ENCODE measurements at regions of chr22 and their contacts with region 1.

Region 1: GRCh38 chr22:31970490-31971444 is 26.4 kb downstream of the YWHAH start:
- DNase-seq: peak; percentile 69 to 97 (median 86)
- ATAC-seq: peak; percentile 99
- H3K4me3 ChIP-seq: peak overlapping the region; percentile 70
- H3K4me3 Mint-ChIP-seq: peak overlapping the region; percentile 72 to 87 (median 82)
- H3K27ac ChIP-seq: peak overlapping the region; percentile 37
- H3K27ac Mint-ChIP-seq: peak overlapping the region in 7 of 9 donors; percentile 19 to 75 (median 62)
- H3K4me1 ChIP-seq: peaks cover 8 to 10% of the 10 kb centered on the region in 2 donors
- H3K4me1 Mint-ChIP-seq: peaks cover 9 to 18% (median 13%) of the 10 kb centered on the region in 7 donors
- H3K27me3 ChIP-seq: no peaks in the 10 kb centered on the region
- H3K27me3 Mint-ChIP-seq: peaks cover 0 to 2% (median 0%) of the 10 kb centered on the region in 5 donors

Region 2: GRCh38 chr22:31556627-31557203 is 414.1 kb before region 1 on chr22:
- CTCF ChIA-PET with region 1: no interaction called
- POLR2A ChIA-PET with region 1: no interaction called
- intact Hi-C with region 1: loop called in 1 of 2 experiments (anchors 1 kb)
- DNase-seq: peak in 5 of 9 donors; percentile 25 to 40 (median 28)
- ATAC-seq: peak; percentile 49
- H3K4me3 ChIP-seq: no peak overlapping the region
- H3K4me3 Mint-ChIP-seq: no peak overlapping the region
- H3K27ac ChIP-seq: no peak overlapping the region
- H3K27ac Mint-ChIP-seq: peak overlapping the region in 1 of 9 donors; percentile 46
- H3K4me1 ChIP-seq: peaks cover 0 to 8% of the 10 kb centered on the region in 2 donors
- H3K4me1 Mint-ChIP-seq: peaks cover 3 to 21% (median 9%) of the 10 kb centered on the region in 7 donors
- H3K27me3 ChIP-seq: no peaks in the 10 kb centered on the region
- H3K27me3 Mint-ChIP-seq: no peaks in the 10 kb centered on the region

Region 3: DNA sequence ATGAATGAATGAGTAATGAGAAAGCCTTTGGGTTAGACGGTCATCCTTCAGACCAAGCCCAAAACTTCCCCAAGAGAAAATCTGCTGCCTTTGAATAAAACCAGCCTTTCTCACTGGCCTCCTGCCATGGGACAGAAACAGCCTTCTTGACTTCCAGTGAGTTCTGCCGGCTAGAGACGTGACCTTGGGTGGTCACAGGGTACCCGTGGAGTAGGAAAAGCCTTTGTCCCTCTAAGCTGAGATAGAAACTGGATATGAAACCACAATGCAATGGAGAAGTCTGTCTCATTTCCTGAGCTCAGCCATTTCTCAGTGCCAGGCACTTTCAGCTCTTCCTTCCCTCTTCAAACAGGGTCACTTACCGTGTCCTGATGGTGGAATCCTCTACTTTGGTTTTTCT is 47.6 kb before region 1 on chr22:
- CTCF ChIA-PET with region 1: no interaction called
- POLR2A ChIA-PET with region 1: no interaction called
- intact Hi-C with region 1: no loop called
- DNase-seq: no peak
- ATAC-seq: peak; percentile 70
- H3K4me3 ChIP-seq: no peak overlapping the region
- H3K4me3 Mint-ChIP-seq: no peak overlapping the region
- H3K27ac ChIP-seq: no peak overlapping the region
- H3K27ac Mint-ChIP-seq: peak overlapping the region in 1 of 9 donors; percentile 3
- H3K4me1 ChIP-seq: no peaks in the 10 kb centered on the region
- H3K4me1 Mint-ChIP-seq: peaks cover 0 to 19% (median 0%) of the 10 kb centered on the region in 7 donors
- H3K27me3 ChIP-seq: no peaks in the 10 kb centered on the region
- H3K27me3 Mint-ChIP-seq: peaks cover 9 to 25% (median 10%) of the 10 kb centered on the region in 5 donors

Region 4: DNA sequence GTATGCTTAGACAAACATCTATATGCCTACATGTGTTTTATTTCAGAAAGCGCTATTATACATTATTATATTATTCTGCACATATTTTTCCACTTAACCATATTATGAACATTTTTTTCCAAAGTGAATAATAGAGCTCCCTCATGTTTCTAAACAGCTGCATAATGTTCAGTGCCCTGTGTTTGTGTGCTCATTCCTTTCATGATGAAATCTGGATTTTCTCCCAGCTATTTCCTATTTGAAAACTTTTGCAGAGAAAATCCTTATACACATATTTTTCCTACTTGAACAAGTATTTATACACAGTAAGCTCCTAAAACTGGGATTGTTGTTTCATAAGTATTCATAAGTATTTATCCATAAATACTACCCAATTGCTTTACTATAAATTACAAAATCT is 252.2 kb after region 1 on chr22:
- CTCF ChIA-PET with region 1: no interaction called
- POLR2A ChIA-PET with region 1: no interaction called
- intact Hi-C with region 1: no loop called
- DNase-seq: no peak
- ATAC-seq: no peak
- H3K4me3 ChIP-seq: no peak overlapping the region
- H3K4me3 Mint-ChIP-seq: no peak overlapping the region
- H3K27ac ChIP-seq: no peak overlapping the region
- H3K27ac Mint-ChIP-seq: no peak overlapping the region
- H3K4me1 ChIP-seq: no peaks in the 10 kb centered on the region
- H3K4me1 Mint-ChIP-seq: no peaks in the 10 kb centered on the region
- H3K27me3 ChIP-seq: no peaks in the 10 kb centered on the region
- H3K27me3 Mint-ChIP-seq: peaks cover 5 to 30% (median 12%) of the 10 kb centered on the region in 5 donors

Region 5: GRCh38 chr22:32660292-32660691 is 689.5 kb after region 1 on chr22:
- CTCF ChIA-PET with region 1: interaction called, 4 read pairs
- POLR2A ChIA-PET with region 1: no interaction called
- intact Hi-C with region 1: loop called in 1 of 2 experiments (anchors 10 kb)
- DNase-seq: peak; percentile 16 to 62 (median 46)
- ATAC-seq: peak; percentile 54
- H3K4me3 ChIP-seq: no peak overlapping the region
- H3K4me3 Mint-ChIP-seq: no peak overlapping the region
- H3K27ac ChIP-seq: no peak overlapping the region
- H3K27ac Mint-ChIP-seq: no peak overlapping the region
- H3K4me1 ChIP-seq: no peaks in the 10 kb centered on the region
- H3K4me1 Mint-ChIP-seq: peaks cover 0 to 5% (median 0%) of the 10 kb centered on the region in 7 donors
- H3K27me3 ChIP-seq: no peaks in the 10 kb centered on the region
- H3K27me3 Mint-ChIP-seq: peaks cover 0 to 15% (median 6%) of the 10 kb centered on the region in 5 donors

Region 6: GRCh38 chr22:32880893-32881596 is 910.3 kb after region 1 on chr22:
- CTCF ChIA-PET with region 1: no interaction called
- POLR2A ChIA-PET with region 1: no interaction called
- intact Hi-C with region 1: loop called in 1 of 2 experiments (anchors 5 kb)
- DNase-seq: peak in 6 of 9 donors; percentile 6 to 38 (median 23)
- ATAC-seq: peak; percentile 56
- H3K4me3 ChIP-seq: no peak overlapping the region
- H3K4me3 Mint-ChIP-seq: peak overlapping the region in 9 of 10 donors; percentile 7 to 87 (median 80)
- H3K27ac ChIP-seq: peak overlapping the region; percentile 58
- H3K27ac Mint-ChIP-seq: peak overlapping the region in 8 of 9 donors; percentile 57 to 87 (median 82)
- H3K4me1 ChIP-seq: peaks cover 0 to 6% of the 10 kb centered on the region in 2 donors
- H3K4me1 Mint-ChIP-seq: peaks cover 0 to 31% (median 19%) of the 10 kb centered on the region in 7 donors
- H3K27me3 ChIP-seq: no peaks in the 10 kb centered on the region
- H3K27me3 Mint-ChIP-seq: peaks cover 0 to 6% (median 0%) of the 10 kb centered on the region in 5 donors

Measured in naive thymus-derived CD4-positive, alpha-beta T cell (primary cell).